Activated CD4-positive, alpha-beta memory T cell treated with anti-CD3 and anti-CD28 coated beads for 36 hours (primary cell): ENCODE measurements at regions of chr3 and their contacts with region 1.

Region 1: GRCh38 chr3:185995352-185995751 is 57.5 kb upstream of the TRA2B start:
- DNase-seq: no peak
- H3K4me3 Mint-ChIP-seq: no peak overlapping the region
- H3K27ac Mint-ChIP-seq: no peak overlapping the region
- H3K4me1 Mint-ChIP-seq: no peaks in the 10 kb centered on the region
- H3K27me3 Mint-ChIP-seq: peaks cover 7% of the 10 kb centered on the region

Region 2: DNA sequence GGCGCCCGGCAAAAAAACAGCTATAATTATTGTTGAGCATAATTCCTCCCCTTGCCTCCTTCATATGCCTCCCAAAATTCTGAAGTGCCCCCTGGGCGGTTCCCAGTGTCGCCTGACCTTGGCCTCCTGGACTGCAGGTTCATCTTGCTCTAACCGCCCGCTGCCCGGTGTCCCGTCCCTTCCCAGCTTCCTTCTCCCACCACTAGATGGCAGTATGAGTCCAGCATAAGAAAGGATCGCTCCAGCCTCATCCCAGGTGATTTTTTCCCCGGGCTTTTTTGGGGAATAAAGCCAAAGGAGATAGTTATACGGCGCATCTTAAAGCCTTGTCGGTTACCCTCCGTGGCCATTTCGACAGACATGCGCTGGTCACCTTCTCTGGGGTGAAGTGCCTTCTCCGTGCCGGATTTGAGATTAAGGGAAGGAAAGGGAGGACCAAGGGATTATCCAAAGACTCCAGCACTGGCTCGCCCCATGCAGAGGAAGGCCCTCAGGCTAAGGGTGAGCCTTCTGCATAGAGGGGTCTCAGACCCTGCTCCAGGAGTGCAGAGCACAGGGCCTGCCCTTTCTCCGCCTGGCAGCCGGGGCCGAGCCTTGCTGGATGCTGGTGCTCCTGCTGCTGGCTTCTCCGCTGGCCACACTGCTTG is 11.7 kb before region 1 on chr3:
- CTCF ChIA-PET with region 1: interaction called, 10 read pairs
- POLR2A ChIA-PET with region 1: interaction called, 3 read pairs
- intact Hi-C with region 1: no loop called
- DNase-seq: peak; percentile 64
- H3K4me3 Mint-ChIP-seq: no peak overlapping the region
- H3K27ac Mint-ChIP-seq: no peak overlapping the region
- H3K4me1 Mint-ChIP-seq: peaks cover 4% of the 10 kb centered on the region
- H3K27me3 Mint-ChIP-seq: peaks cover 11% of the 10 kb centered on the region

Region 3: GRCh38 chr3:186035277-186035676 is 39.9 kb after region 1 on chr3:
- CTCF ChIA-PET with region 1: no interaction called
- POLR2A ChIA-PET with region 1: no interaction called
- intact Hi-C with region 1: no loop called
- DNase-seq: no peak
- H3K4me3 Mint-ChIP-seq: no peak overlapping the region
- H3K27ac Mint-ChIP-seq: no peak overlapping the region
- H3K4me1 Mint-ChIP-seq: no peaks in the 10 kb centered on the region
- H3K27me3 Mint-ChIP-seq: peaks cover 15% of the 10 kb centered on the region